ENCODE measurements at regions of chr4 and their contacts with region 1.

Region 1: DNA sequence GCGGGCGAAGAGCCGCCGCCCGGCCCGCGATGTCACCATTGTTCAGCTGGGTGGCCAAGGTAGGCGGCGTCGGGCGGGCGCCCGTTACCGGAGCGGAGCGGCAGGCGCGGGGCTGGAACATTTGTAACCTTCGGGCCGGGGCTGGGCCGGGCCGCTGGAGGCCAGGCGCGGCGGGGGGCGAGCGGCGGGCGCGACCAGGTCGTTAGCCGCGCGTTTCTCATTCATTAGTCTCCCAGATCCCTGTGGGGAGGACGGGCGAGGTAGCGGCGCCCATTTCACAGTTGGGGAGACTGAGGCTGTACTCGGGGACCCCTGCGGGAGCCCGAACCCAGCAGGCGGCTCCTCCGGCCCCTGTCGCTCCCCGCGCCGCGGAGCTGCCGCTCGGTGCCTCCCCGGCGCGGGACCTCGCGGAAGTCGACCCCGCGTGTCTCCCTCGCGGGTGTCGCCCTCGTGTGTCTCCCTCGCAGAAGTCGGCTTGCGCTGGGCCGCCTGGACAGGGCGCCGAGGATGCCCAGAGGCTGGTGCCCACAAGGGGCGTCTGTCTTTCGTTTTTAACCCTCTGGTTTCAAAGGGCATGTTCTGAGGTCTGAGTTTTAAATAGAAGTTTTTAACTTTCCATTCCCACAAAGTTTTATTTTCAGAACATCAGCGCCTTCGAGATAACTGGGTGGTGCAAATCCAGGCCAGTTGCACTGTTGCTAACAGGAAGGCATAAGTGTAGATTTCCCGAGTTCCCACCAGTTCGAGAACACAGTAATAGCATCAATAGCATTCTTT is 17.5 kb downstream of the PTTG2 start:
- DNase-seq: peak; percentile 26
- ATAC-seq: peak; percentile 78
- H3K4me3 ChIP-seq: peak overlapping the region; percentile 61 to 68
- H3K27ac ChIP-seq: peak overlapping the region; percentile 57
- H3K4me1 ChIP-seq: peaks cover 6 to 29% of the 10 kb centered on the region in 2 experiments; a peak in 3 of 4 replicates
- H3K27me3 ChIP-seq: no peaks in the 10 kb centered on the region
- CTCF ChIP-seq: peak; percentile 37 to 64 (median 59); a peak in 4 of 6 replicates
- POLR2A ChIP-seq: no peak
- RAD21 ChIP-seq: peak; percentile 50

Region 2: DNA sequence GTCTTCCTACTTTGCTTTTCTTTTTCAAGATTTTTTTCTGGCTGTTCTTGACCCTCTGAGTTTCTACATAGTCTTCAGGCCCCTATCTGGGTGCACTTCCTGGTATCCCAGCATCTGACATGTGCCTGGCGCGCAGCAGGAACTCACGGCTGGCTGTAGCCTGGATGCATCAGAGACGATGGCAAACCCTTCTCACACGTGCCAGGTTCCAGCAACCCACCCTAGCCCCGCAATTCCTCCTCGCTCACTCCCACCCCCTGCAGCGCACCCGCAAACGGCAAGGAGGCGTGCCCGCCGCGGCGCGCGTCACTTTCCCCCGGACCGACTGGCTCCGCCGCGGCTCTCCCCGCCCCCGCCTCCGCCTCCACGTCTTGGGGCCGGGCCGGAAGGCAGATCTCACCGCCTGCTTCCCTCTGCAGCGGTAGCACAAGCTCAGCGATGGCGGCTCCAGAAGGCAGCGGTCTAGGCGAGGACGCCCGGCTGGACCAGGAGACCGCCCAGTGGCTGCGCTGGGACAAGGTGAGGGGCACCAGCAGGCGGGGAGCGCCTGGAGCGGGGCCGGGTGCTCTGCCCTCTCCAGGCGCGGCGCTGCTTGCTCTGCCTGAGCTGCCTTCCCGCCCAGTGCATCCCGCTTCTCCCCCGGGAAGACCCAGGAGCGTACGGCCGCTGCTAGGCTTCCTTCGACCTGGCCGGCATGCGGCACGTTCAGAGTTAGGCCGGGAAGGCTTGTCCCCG is 151.2 kb before region 1 on chr4 and contains the start of gene PGM2:
- CTCF ChIA-PET with region 1: no interaction called
- POLR2A ChIA-PET with region 1: no interaction called
- RAD21 ChIA-PET with region 1: no interaction called
- intact Hi-C with region 1: loop called (anchors 10 kb)
- DNase-seq: peak; percentile 67
- ATAC-seq: peak; percentile 95
- H3K4me3 ChIP-seq: peak within 1 kb of the TSS; percentile 76 to 98
- H3K27ac ChIP-seq: peak within 1 kb of the TSS; percentile 48
- H3K4me1 ChIP-seq: peaks cover 11 to 19% of the 10 kb centered on the region in 2 experiments; a peak in 2 of 4 replicates
- H3K27me3 ChIP-seq: no peaks in the 10 kb centered on the region
- CTCF ChIP-seq: no peak
- POLR2A ChIP-seq: peak; percentile 80
- RAD21 ChIP-seq: no peak
- total RNA-seq, gene PGM2: 48.6 TPM

Region 3: GRCh38 chr4:37891260-37892159 is 86.1 kb before region 1 on chr4:
- CTCF ChIA-PET with region 1: no interaction called
- POLR2A ChIA-PET with region 1: no interaction called
- RAD21 ChIA-PET with region 1: no interaction called
- intact Hi-C with region 1: no loop called
- DNase-seq: no peak
- ATAC-seq: peak; percentile 80
- H3K4me3 ChIP-seq: peak overlapping the region; percentile 57 to 73
- H3K27ac ChIP-seq: peak overlapping the region; percentile 52; the same call in 1 of the 2 replicates
- H3K4me1 ChIP-seq: peaks cover 4 to 13% of the 10 kb centered on the region in 2 experiments; a peak in 2 of 4 replicates
- H3K27me3 ChIP-seq: no peaks in the 10 kb centered on the region
- CTCF ChIP-seq: 0 out of 6 replicates have a peak, but pooled peaks of 1 of the 3 experiments have one; percentile 2
- POLR2A ChIP-seq: no peak
- RAD21 ChIP-seq: no peak

Region 4: GRCh38 chr4:37936889-37937498 is 40.7 kb before region 1 on chr4:
- CTCF ChIA-PET with region 1: no interaction called
- POLR2A ChIA-PET with region 1: no interaction called
- RAD21 ChIA-PET with region 1: no interaction called
- intact Hi-C with region 1: no loop called
- DNase-seq: no peak
- ATAC-seq: no peak
- H3K4me3 ChIP-seq: no peak overlapping the region
- H3K27ac ChIP-seq: no peak overlapping the region
- H3K4me1 ChIP-seq: no peaks in the 10 kb centered on the region
- H3K27me3 ChIP-seq: no peaks in the 10 kb centered on the region
- CTCF ChIP-seq: no peak
- POLR2A ChIP-seq: no peak
- RAD21 ChIP-seq: no peak

Region 5: GRCh38 chr4:38160487-38161207 is 183.0 kb after region 1 on chr4:
- CTCF ChIA-PET with region 1: no interaction called
- POLR2A ChIA-PET with region 1: no interaction called
- RAD21 ChIA-PET with region 1: no interaction called
- intact Hi-C with region 1: loop called (anchors 10 kb)
- DNase-seq: peak; percentile 88
- ATAC-seq: peak; percentile 70
- H3K4me3 ChIP-seq: no peak overlapping the region
- H3K27ac ChIP-seq: peak overlapping the region; percentile 43
- H3K4me1 ChIP-seq: peaks cover 36 to 54% of the 10 kb centered on the region in 2 experiments
- H3K27me3 ChIP-seq: no peaks in the 10 kb centered on the region
- CTCF ChIP-seq: no peak
- POLR2A ChIP-seq: no peak
- RAD21 ChIP-seq: no peak